Left colon (tissue), 2 donors: ENCODE measurements at regions of chr1 and their contacts with region 1.

Region 1: GRCh38 chr1:12596007-12596821 is 21.8 kb downstream of the DHRS3 start:
- DNase-seq: peak; percentile 49 to 90
- ATAC-seq: peak; percentile 82

Region 2: DNA sequence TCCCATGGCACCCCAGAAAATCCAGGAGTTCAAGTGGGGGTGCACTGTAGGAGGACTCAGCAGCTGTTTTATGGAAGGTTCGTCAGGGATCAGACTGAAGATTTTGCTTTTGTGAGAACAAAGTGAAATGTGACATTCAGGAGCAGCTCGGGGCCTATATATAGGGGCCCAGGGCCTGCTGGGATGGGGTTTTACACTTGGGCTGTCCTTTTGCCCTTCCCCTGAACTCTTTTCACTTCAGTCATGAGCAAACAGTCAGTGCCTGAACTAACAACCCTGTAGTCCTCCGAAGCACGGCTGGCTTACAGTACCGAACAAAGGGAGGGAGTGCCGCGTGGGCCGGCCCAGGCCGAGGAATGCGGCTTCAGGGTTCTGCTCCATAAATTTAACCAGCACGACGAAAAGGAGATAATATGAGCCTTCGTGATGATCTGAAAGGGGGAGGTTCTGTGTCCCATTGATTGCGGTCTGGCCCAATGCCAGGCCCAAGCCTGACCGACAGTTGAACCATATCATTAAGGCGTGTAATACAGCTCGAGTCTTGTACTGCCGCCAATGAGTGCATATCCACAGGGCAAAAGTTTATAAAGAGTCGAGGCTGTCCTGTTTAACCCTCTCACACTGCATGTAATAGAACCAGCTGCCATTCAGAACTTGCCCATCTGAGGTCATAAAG is 118.1 kb before region 1 on chr1:
- intact Hi-C with region 1: loop called in 1 of 2 experiments (anchors 10 kb)
- DNase-seq: peak; percentile 91 to 92
- ATAC-seq: peak; percentile 72

Region 3: DNA sequence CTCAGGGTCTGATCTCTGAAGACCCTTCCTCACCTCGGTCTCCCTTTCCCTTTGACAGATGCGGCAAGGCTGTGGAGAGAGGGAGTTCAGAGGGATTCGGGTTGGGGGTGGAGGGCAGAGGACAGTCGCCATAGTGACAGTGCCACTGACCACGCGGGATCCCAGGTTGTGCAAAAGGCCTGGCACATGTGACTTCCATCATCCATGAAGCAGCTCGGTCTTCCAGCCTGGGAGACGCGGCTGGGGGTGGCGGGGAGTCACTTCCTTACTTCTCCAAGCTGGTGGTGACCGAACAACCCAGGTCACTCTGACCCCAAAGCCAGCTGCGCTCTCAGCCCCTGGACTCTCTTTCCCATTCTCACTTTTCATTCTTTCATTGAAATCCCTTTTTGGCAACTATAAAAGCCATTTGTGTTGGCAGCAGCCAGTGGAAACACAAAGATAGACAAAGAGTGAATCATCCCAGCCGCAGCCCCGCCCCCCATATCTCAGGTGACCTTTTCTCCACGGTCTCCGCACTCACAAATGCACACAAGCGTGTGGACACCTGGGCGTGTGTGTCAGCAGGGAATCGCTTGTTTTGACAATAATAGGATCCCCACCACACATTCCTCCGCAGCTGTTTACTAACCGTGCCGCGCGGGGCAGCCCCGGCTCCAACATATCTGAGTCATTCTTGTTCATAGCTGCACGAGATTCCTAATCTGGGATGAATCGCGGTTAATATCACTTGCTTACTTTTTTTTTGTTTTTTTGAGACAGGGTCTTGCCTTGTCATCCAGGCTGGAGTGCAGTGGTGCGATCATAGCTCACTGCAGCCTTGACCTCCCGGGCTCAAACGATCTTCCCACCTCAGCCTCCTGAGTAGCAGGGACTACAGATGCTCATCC is 46.5 kb before region 1 on chr1:
- intact Hi-C with region 1: loop called in 1 of 2 experiments (anchors 10 kb)
- DNase-seq: peak; percentile 71 to 72
- ATAC-seq: peak; percentile 84